Activated T-helper 2 cell treated with anti-CD3 and anti-CD28 coated beads, Interferon-gamma antibody, Interleukin-2, Interleukin-4, amounts not matched to agents 10 μg/mL and 5 μg/mL and 100 μg/mL, durations not matched to agents 14 hours and 24 hours and 36 hours (primary cell): ENCODE measurements at regions of chr7 and their contacts with region 1.

Region 1: DNA sequence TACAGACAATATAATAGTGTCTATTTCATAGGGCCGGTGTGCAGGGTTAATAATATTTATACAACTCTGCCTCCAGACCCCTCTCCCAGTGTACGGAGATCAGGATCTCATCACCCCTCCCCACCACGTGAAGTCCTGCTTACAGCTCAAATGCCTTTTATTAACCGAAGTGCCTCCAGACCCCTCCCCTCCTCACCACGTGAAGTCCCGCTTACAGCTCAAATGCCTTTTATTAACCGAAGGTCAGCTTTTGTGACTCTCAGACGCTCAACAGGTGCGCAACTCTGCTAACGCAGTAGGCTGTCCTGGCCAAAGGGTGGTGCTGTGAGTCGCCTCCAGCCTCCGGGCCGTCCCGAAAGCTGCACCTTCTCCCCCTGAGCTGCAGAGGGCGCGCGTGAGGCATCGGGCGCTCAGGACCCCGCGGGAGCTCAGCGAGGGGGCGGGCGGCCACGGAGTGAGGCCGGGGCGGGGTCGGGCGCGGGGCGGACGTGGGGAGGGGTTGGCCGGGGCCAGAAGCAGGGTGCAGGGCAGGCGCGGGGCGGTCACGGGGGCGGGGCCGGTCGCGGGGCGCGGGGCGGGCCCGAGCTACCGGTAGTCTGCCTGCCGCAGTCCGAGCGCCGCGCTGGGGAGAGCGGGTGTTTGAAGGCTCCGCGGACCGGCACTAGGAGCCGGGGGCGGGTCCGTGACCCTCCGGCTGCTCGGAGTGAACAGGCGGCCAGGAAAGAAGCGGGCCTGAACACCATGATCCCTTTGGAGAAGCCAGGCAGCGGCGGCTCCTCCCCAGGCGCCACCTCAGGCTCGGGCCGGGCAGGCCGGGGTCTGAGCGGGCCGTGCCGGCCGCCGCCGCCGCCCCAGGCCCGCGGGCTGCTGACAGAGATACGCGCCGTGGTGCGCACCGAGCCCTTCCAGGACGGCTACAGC is at the start of gene STK17A:
- DNase-seq: peak; percentile 94
- H3K4me3 Mint-ChIP-seq: peak within 1 kb of the TSS; percentile 91
- H3K27ac Mint-ChIP-seq: peak within 1 kb of the TSS; percentile 91
- H3K4me1 Mint-ChIP-seq: peaks cover 34% of the 10 kb centered on the region
- H3K27me3 Mint-ChIP-seq: peaks cover 19% of the 10 kb centered on the region
- total RNA-seq, gene STK17A: 20.4 and 21.7 TPM in 2 replicates

Region 2: GRCh38 chr7:41881331-41882130 is 1701.2 kb before region 1 on chr7:
- intact Hi-C with region 1: loop called (anchors 5 kb)
- DNase-seq: peak; percentile 76
- H3K4me3 Mint-ChIP-seq: peak overlapping the region; percentile 66
- H3K27ac Mint-ChIP-seq: peak overlapping the region; percentile 94
- H3K4me1 Mint-ChIP-seq: peaks cover 59% of the 10 kb centered on the region
- H3K27me3 Mint-ChIP-seq: no peaks in the 10 kb centered on the region

Region 3: DNA sequence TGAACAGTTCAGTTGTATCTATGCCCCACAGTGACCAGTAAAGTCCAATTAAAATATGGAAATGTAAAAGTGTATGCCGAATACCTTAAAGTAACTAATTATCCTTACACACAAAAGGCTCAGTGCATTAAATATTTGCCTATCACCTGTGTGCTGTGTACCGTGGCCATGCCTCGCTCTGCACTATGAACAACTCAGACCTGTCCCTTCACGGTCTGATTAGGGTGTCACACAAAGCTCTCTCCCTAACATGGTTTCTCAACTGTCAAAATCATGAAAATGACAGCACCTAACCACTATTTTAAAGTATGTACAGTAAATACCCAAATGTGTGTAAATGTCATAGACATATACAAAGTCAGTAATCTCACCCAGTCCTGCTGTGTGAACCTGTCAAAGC is 43.2 kb after region 1 on chr7:
- intact Hi-C with region 1: loop called (anchors 1 kb)
- DNase-seq: no peak
- H3K4me3 Mint-ChIP-seq: no peak overlapping the region
- H3K27ac Mint-ChIP-seq: peak overlapping the region; percentile 37
- H3K4me1 Mint-ChIP-seq: peaks cover 61% of the 10 kb centered on the region
- H3K27me3 Mint-ChIP-seq: no peaks in the 10 kb centered on the region

Region 4: GRCh38 chr7:43700059-43700501 is 117.3 kb after region 1 on chr7:
- intact Hi-C with region 1: loop called (anchors 1 kb)
- DNase-seq: no peak
- H3K4me3 Mint-ChIP-seq: no peak overlapping the region
- H3K27ac Mint-ChIP-seq: no peak overlapping the region
- H3K4me1 Mint-ChIP-seq: peaks cover 46% of the 10 kb centered on the region
- H3K27me3 Mint-ChIP-seq: no peaks in the 10 kb centered on the region

Region 5: GRCh38 chr7:43729214-43729923 is 146.6 kb after region 1 on chr7 and contains the start of gene COA1:
- intact Hi-C with region 1: loop called (anchors 2 kb)
- DNase-seq: peak; percentile 73
- H3K4me3 Mint-ChIP-seq: peak within 1 kb of the TSS; percentile 86
- H3K27ac Mint-ChIP-seq: peak within 1 kb of the TSS; percentile 84
- H3K4me1 Mint-ChIP-seq: peaks cover 25% of the 10 kb centered on the region
- H3K27me3 Mint-ChIP-seq: no peaks in the 10 kb centered on the region
- total RNA-seq, gene COA1: 67.1 and 69.1 TPM in 2 replicates

Region 6: GRCh38 chr7:43856996-43857395 is 274.2 kb after region 1 on chr7:
- intact Hi-C with region 1: loop called (anchors 5 kb)
- DNase-seq: no peak
- H3K4me3 Mint-ChIP-seq: no peak overlapping the region
- H3K27ac Mint-ChIP-seq: no peak overlapping the region
- H3K4me1 Mint-ChIP-seq: no peaks in the 10 kb centered on the region
- H3K27me3 Mint-ChIP-seq: peaks cover 18% of the 10 kb centered on the region